CD4-positive, alpha-beta memory T cell (primary cell): ENCODE measurements at regions of chr1 and their contacts with region 1.

Region 1: DNA sequence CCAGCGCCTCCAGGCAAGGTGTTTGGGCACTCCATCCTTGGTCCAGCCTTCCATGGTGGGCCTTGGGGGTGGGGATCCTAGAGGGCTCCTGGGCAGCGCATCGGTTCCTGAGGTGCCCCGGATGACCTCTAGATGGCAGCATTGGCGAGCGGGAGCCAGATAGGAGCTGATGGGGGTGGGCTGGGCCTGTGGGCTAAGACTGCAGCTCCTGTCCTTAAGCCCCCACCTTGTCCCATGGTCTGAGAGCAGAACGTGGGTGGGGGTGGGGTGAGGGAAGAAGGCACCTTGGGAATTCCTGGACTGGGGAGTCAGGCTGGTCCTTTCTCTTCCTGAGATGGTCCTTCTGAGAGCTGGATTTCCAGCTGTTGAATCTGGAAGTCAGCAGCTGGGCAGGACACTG is 93.4 kb upstream of the CSF3R start:
- DNase-seq: peak; percentile 15 to 41 (median 34)
- H3K4me3 ChIP-seq: no peak overlapping the region
- H3K4me3 Mint-ChIP-seq: no peak overlapping the region
- H3K27ac ChIP-seq: no peak overlapping the region
- H3K27ac Mint-ChIP-seq: no peak overlapping the region
- H3K4me1 ChIP-seq: no peaks in the 10 kb centered on the region
- H3K4me1 Mint-ChIP-seq: no peaks in the 10 kb centered on the region
- H3K27me3 ChIP-seq: peaks cover 5% of the 10 kb centered on the region
- H3K27me3 Mint-ChIP-seq: peaks cover 17 to 31% of the 10 kb centered on the region in 2 donors

Region 2: GRCh38 chr1:36650200-36651065 is 74.3 kb after region 1 on chr1:
- CTCF ChIA-PET with region 1: interaction called, 11 read pairs
- POLR2A ChIA-PET with region 1: no interaction called
- intact Hi-C with region 1: loop called (anchors 2 kb)
- DNase-seq: peak; percentile 36 to 52 (median 40)
- H3K4me3 ChIP-seq: no peak overlapping the region
- H3K4me3 Mint-ChIP-seq: no peak overlapping the region
- H3K27ac ChIP-seq: no peak overlapping the region
- H3K27ac Mint-ChIP-seq: peak overlapping the region in 1 of 7 donors; percentile 3
- H3K4me1 ChIP-seq: no peaks in the 10 kb centered on the region
- H3K4me1 Mint-ChIP-seq: peaks cover 0 to 10% (median 4%) of the 10 kb centered on the region in 4 donors
- H3K27me3 ChIP-seq: peaks cover 9% of the 10 kb centered on the region
- H3K27me3 Mint-ChIP-seq: peaks cover 23 to 40% of the 10 kb centered on the region in 2 donors

Region 3: GRCh38 chr1:37434292-37434907 is 858.3 kb after region 1 on chr1:
- CTCF ChIA-PET with region 1: interaction called, 28 read pairs
- POLR2A ChIA-PET with region 1: no interaction called
- intact Hi-C with region 1: no loop called
- DNase-seq: peak; percentile 46 to 58 (median 56)
- H3K4me3 ChIP-seq: no peak overlapping the region
- H3K4me3 Mint-ChIP-seq: no peak overlapping the region
- H3K27ac ChIP-seq: no peak overlapping the region
- H3K27ac Mint-ChIP-seq: no peak overlapping the region
- H3K4me1 ChIP-seq: no peaks in the 10 kb centered on the region
- H3K4me1 Mint-ChIP-seq: no peaks in the 10 kb centered on the region
- H3K27me3 ChIP-seq: peaks cover 4% of the 10 kb centered on the region
- H3K27me3 Mint-ChIP-seq: peaks cover 11 to 31% of the 10 kb centered on the region in 2 donors